Activated CD4-positive, alpha-beta memory T cell treated with anti-CD3 and anti-CD28 coated beads, Interleukin-2, amount 10 ng/mL, durations not matched to agents 7 days and 5 days (primary cell): ENCODE measurements at regions of chr4 and their contacts with region 1.

Region 1: GRCh38 chr4:20684852-20685763 is 15.2 kb upstream of the PACRGL start:
- DNase-seq: no peak
- H3K4me3 Mint-ChIP-seq: no peak overlapping the region
- H3K27ac Mint-ChIP-seq: no peak overlapping the region
- H3K4me1 Mint-ChIP-seq: no peaks in the 10 kb centered on the region
- H3K27me3 Mint-ChIP-seq: peaks cover 11% of the 10 kb centered on the region

Region 2: GRCh38 chr4:20395160-20395773 is 289.8 kb before region 1 on chr4:
- CTCF ChIA-PET with region 1: interaction called, 15 read pairs
- POLR2A ChIA-PET with region 1: no interaction called
- DNase-seq: peak; percentile 21
- H3K4me3 Mint-ChIP-seq: no peak overlapping the region
- H3K27ac Mint-ChIP-seq: no peak overlapping the region
- H3K4me1 Mint-ChIP-seq: no peaks in the 10 kb centered on the region
- H3K27me3 Mint-ChIP-seq: no peaks in the 10 kb centered on the region

Region 3: GRCh38 chr4:20418861-20419451 is 266.2 kb before region 1 on chr4:
- CTCF ChIA-PET with region 1: interaction called, 16 read pairs
- POLR2A ChIA-PET with region 1: no interaction called
- DNase-seq: no peak
- H3K4me3 Mint-ChIP-seq: peak overlapping the region; percentile 45
- H3K27ac Mint-ChIP-seq: no peak overlapping the region
- H3K4me1 Mint-ChIP-seq: peaks cover 6% of the 10 kb centered on the region
- H3K27me3 Mint-ChIP-seq: peaks cover 1% of the 10 kb centered on the region

Region 4: GRCh38 chr4:20700007-20700761 is 15.1 kb after region 1 on chr4 and contains the start of gene PACRGL:
- CTCF ChIA-PET with region 1: interaction called, 11 read pairs
- POLR2A ChIA-PET with region 1: interaction called, 3 read pairs
- DNase-seq: peak; percentile 93
- H3K4me3 Mint-ChIP-seq: peak within 1 kb of the TSS; percentile 89
- H3K27ac Mint-ChIP-seq: peak within 1 kb of the TSS; percentile 68
- H3K4me1 Mint-ChIP-seq: peaks cover 27% of the 10 kb centered on the region
- H3K27me3 Mint-ChIP-seq: no peaks in the 10 kb centered on the region
- total RNA-seq, gene PACRGL: 8.0 to 9.6 TPM